SK-N-SH (cell line): ENCODE measurements at regions of chr10 and their contacts with region 1.

Region 1: GRCh38 chr10:102752934-102753664 is 9.4 kb downstream of the WBP1L start:
- DNase-seq: peak; percentile 49
- H3K4me3 ChIP-seq: no peak overlapping the region
- H3K27ac ChIP-seq: peak overlapping the region in 1 of 2 experiments; percentile 34; a peak in 1 of 4 replicates
- H3K4me1 ChIP-seq: peaks cover 2 to 7% of the 10 kb centered on the region in 2 experiments; a peak in 1 of 4 replicates
- H3K27me3 ChIP-seq: no peaks in the 10 kb centered on the region
- CTCF ChIP-seq: peak; percentile 71
- EP300 ChIP-seq: no peak
- RAD21 ChIP-seq: peak; percentile 68

Region 2: DNA sequence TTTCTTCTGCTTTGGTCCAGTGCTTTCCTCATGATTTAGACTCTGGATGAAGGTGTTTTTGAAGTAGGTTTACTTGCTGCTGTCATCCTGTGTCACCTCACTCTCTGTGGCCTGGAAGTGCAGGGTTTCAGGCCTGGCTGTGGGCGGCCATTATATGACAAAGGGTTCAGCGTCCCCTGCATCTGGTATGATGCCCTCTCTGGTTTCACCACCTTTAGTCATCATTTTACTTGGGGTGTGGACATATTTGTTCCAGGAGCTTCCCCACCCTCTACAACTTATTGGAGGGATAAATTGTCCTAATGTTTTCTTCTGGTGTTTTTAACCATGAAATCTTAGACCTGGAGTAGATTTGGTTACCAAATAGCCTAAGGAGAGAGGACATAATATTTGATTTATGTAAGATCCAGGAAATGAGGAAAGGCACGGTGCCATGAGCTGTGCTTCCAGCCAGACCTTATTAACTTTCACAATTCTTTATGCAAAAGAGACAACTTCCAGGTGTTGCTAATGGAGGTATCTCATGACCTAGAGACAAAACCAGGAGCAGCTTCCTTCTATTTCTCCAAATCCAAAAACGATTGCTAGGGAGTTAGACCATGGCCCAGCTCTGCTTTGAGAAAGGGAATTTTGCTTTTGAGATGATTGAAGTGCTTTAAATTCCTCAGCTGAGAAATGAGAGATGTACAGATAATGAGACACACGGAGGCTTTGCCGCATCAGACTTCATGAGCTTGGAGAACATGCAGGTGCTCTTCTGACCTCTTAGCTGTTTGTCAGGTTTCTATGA is 11.5 kb after region 1 on chr10:
- CTCF ChIA-PET with region 1: interaction called, 13 read pairs
- POLR2A ChIA-PET with region 1: no interaction called
- DNase-seq: no peak
- H3K4me3 ChIP-seq: no peak overlapping the region
- H3K27ac ChIP-seq: peak overlapping the region; percentile 29 to 62
- H3K4me1 ChIP-seq: peaks cover 8 to 13% of the 10 kb centered on the region in 2 experiments; a peak in 2 of 4 replicates
- H3K27me3 ChIP-seq: no peaks in the 10 kb centered on the region
- CTCF ChIP-seq: no peak
- EP300 ChIP-seq: no peak; a peak in 1 of 4 replicates
- RAD21 ChIP-seq: no peak